ENCODE measurements at regions of chr5 and their contacts with region 1.

Region 1: DNA sequence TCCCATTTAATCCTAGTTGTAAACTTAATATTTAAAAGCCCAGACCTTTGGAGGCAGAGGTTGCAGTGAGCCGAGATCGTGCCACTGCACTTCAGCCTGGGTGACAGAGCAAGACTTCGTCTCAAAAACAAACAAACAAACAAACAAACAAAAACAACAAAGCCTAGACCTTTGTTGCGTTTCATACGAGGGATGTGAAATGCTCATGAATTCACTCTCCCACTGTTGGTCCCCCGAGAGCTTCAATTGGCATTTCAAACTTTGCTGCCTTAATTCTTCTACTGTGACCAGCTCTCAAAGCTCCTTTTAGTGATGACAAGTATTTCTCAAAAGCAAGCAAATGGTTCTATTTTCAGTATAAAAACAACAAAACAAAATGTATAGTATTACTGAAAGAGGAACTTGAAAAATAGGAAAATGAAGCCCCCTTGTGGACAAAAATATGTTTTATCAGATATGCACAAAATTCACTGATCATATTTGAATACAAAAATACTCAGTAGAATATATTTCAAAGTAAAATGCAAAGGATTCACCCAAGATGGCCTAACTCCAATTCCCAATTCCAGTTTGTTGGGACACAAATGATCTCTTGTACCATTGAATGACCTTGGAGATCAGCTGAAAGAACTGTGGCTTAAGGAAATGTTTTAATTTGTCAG is 140.4 kb downstream of the ESM1 start:
- DNase-seq: peak; percentile 41
- H3K4me3 ChIP-seq: no peak overlapping the region
- H3K27ac ChIP-seq: no peak overlapping the region
- H3K27me3 ChIP-seq: no peaks in the 10 kb centered on the region
- CTCF ChIP-seq: peak; percentile 40

Region 2: GRCh38 chr5:54524704-54525103 is 320.3 kb before region 1 on chr5:
- CTCF ChIA-PET with region 1: interaction called, 81 read pairs
- POLR2A ChIA-PET with region 1: no interaction called
- DNase-seq: no peak
- H3K4me3 ChIP-seq: peak overlapping the region; percentile 53
- H3K27ac ChIP-seq: no peak overlapping the region
- H3K27me3 ChIP-seq: no peaks in the 10 kb centered on the region
- CTCF ChIP-seq: no peak

Region 3: GRCh38 chr5:54761213-54761701 is 83.8 kb before region 1 on chr5:
- CTCF ChIA-PET with region 1: interaction called, 12 read pairs
- POLR2A ChIA-PET with region 1: interaction called, 3 read pairs
- DNase-seq: peak; percentile 82
- H3K4me3 ChIP-seq: no peak overlapping the region
- H3K27ac ChIP-seq: peak overlapping the region; percentile 94
- H3K27me3 ChIP-seq: no peaks in the 10 kb centered on the region
- CTCF ChIP-seq: no peak

Measured in AG04450 (cell line).